GM12878 (cell line): ENCODE measurements at regions of chr7 and their contacts with region 1.

Region 1: GRCh38 chr7:104883718-104884452 is 130.1 kb upstream of the KMT2E start:
- DNase-seq: peak; percentile 61
- ATAC-seq: peak; percentile 92
- H3K4me3 ChIP-seq: no peak overlapping the region
- H3K27ac ChIP-seq: no peak overlapping the region
- H3K4me1 ChIP-seq: peaks cover 19% of the 10 kb centered on the region
- H3K27me3 ChIP-seq: no peaks in the 10 kb centered on the region
- CTCF ChIP-seq: peak; percentile 93 to 96 (median 94); a peak in 5 of 6 replicates
- EP300 ChIP-seq: no peak
- POLR2A ChIP-seq: no peak
- RAD21 ChIP-seq: peak; percentile 89

Region 2: GRCh38 chr7:104643587-104644217 is 240.2 kb before region 1 on chr7:
- CTCF ChIA-PET with region 1: interaction called, 26 read pairs
- POLR2A ChIA-PET with region 1: interaction called, 4 read pairs
- RAD21 ChIA-PET with region 1: interaction called, 16 read pairs
- SMC1A ChIA-PET with region 1: interaction called, 11 read pairs
- in situ Hi-C with region 1: no loop called
- intact Hi-C with region 1: no loop called
- DNase-seq: no peak
- ATAC-seq: peak; percentile 58; the same call in 2 of the 3 replicates
- H3K4me3 ChIP-seq: no peak overlapping the region
- H3K27ac ChIP-seq: no peak overlapping the region
- H3K4me1 ChIP-seq: no peaks in the 10 kb centered on the region
- H3K27me3 ChIP-seq: no peaks in the 10 kb centered on the region; a peak in 2 of 4 replicates
- CTCF ChIP-seq: peak; percentile 54 to 60 (median 59)
- EP300 ChIP-seq: no peak
- POLR2A ChIP-seq: no peak
- RAD21 ChIP-seq: peak; percentile 38

Region 3: DNA sequence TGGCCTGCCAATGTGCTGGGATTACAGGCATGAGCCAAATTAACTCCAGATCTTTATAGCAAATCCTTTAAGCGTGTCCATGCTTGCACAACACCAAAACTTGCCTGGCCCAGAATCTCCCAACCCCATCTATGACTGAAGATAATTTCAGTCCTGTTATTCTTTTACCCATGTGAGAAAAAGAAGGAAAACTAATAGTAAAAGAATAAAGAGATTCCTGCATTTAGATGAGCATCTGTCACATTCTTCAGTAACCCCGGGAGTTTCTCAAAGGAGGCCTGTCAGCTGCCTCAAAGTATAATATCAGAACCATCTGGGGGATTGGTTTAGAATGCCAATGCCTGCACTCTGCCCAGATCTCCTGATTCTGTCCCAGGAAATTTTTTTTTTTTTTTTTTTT is 28.0 kb before region 1 on chr7:
- CTCF ChIA-PET with region 1: interaction called, 24 read pairs
- POLR2A ChIA-PET with region 1: interaction called, 6 read pairs
- RAD21 ChIA-PET with region 1: interaction called, 9 read pairs
- SMC1A ChIA-PET with region 1: interaction called, 18 read pairs
- in situ Hi-C with region 1: no loop called
- intact Hi-C with region 1: no loop called
- DNase-seq: no peak
- ATAC-seq: no peak
- H3K4me3 ChIP-seq: no peak overlapping the region
- H3K27ac ChIP-seq: no peak overlapping the region
- H3K4me1 ChIP-seq: peaks cover 10% of the 10 kb centered on the region
- H3K27me3 ChIP-seq: no peaks in the 10 kb centered on the region
- CTCF ChIP-seq: no peak
- EP300 ChIP-seq: no peak
- POLR2A ChIP-seq: no peak
- RAD21 ChIP-seq: no peak

Region 4: DNA sequence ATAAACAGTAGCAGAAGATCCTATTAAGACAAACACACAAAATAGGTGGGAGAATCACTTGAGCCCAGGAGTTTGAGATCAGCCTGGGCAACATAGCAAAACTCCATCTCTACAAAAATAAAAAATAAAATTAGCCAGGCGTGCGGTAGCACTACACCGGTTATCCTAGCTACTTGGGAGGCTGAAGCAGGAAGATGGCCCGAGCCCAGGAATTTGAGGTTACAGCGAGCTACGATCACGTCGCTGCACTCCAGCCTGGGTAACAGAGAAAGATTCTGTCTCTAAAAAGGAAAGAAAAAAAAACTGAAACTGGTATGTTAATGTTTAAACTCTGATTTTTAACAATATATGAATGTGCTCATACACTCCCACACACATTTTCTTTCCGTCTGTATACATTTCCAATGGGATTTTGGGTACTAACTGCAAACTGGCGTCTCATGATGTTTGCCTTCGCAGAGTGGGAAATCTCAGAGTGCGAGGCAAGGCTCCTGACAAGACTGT is 10.5 kb before region 1 on chr7:
- CTCF ChIA-PET with region 1: interaction called, 34 read pairs
- POLR2A ChIA-PET with region 1: interaction called, 3 read pairs
- RAD21 ChIA-PET with region 1: interaction called, 7 read pairs
- SMC1A ChIA-PET with region 1: interaction called, 14 read pairs
- in situ Hi-C with region 1: no loop called
- intact Hi-C with region 1: no loop called
- DNase-seq: no peak
- ATAC-seq: peak; percentile 43
- H3K4me3 ChIP-seq: no peak overlapping the region
- H3K27ac ChIP-seq: no peak overlapping the region
- H3K4me1 ChIP-seq: no peaks in the 10 kb centered on the region
- H3K27me3 ChIP-seq: no peaks in the 10 kb centered on the region
- CTCF ChIP-seq: no peak
- EP300 ChIP-seq: no peak
- POLR2A ChIP-seq: no peak
- RAD21 ChIP-seq: no peak

Region 5: GRCh38 chr7:104908636-104909035 is 24.8 kb after region 1 on chr7:
- CTCF ChIA-PET with region 1: interaction called, 581 read pairs
- POLR2A ChIA-PET with region 1: interaction called, 6 read pairs
- RAD21 ChIA-PET with region 1: interaction called, 217 read pairs
- SMC1A ChIA-PET with region 1: interaction called, 413 read pairs
- in situ Hi-C with region 1: no loop called
- intact Hi-C with region 1: no loop called
- DNase-seq: no peak
- ATAC-seq: no peak
- H3K4me3 ChIP-seq: no peak overlapping the region
- H3K27ac ChIP-seq: no peak overlapping the region
- H3K4me1 ChIP-seq: no peaks in the 10 kb centered on the region
- H3K27me3 ChIP-seq: no peaks in the 10 kb centered on the region
- CTCF ChIP-seq: no peak
- EP300 ChIP-seq: no peak
- POLR2A ChIP-seq: no peak
- RAD21 ChIP-seq: no peak

Region 6: DNA sequence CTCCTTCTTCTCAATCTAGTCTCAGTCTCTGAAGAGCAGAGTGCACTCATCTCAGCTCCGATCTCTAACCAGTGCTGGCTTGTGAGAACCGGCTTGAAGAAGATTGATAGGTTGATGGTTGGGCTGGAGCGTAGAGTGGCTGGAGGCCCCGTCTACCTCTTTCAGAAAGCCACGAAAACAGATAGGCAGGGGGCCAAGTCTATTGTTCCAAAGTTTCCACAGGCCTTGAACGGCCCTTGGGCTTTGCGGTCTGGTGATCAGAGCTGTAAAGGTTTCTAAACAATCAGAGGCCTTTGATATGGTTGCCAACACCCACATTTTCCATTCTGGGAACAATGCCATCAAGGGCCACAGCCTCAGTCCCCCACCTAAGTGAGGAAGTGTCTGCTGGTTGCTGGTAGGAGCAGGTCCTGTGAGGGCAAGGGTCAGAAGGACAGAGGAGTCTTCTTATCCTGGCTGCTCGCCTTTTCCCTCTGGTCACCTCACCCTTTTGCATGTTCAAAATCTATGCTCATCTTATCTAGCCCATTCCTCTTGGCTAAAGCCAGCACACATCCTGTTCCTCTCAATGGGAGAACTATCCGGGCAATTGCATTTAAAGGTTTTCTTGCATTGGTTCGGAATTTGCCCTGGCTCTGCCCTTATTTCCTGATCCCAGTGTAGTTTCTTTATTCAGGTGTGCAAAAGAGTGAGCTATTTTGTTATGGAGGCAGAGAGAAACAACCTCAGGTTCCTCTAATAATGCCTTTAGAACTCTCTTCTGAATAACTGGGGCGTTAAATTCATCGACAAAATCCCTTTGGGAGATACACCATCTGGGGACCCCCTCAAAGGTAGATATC is 59.8 kb after region 1 on chr7:
- CTCF ChIA-PET with region 1: interaction called, 14 read pairs
- POLR2A ChIA-PET with region 1: interaction called, 4 read pairs
- RAD21 ChIA-PET with region 1: no interaction called
- SMC1A ChIA-PET with region 1: interaction called, 4 read pairs
- in situ Hi-C with region 1: no loop called
- intact Hi-C with region 1: no loop called
- DNase-seq: peak; percentile 83
- ATAC-seq: peak; percentile 75
- H3K4me3 ChIP-seq: peak overlapping the region; percentile 39; the same call in 1 of the 2 replicates
- H3K27ac ChIP-seq: peak overlapping the region; percentile 93
- H3K4me1 ChIP-seq: peaks cover 39% of the 10 kb centered on the region
- H3K27me3 ChIP-seq: no peaks in the 10 kb centered on the region
- CTCF ChIP-seq: no peak
- EP300 ChIP-seq: peak; percentile 90 to 91
- POLR2A ChIP-seq: peak; percentile 55
- RAD21 ChIP-seq: no peak